Calu3 (cell line): ENCODE measurements at regions of chr7 and their contacts with region 1.

Region 1: DNA sequence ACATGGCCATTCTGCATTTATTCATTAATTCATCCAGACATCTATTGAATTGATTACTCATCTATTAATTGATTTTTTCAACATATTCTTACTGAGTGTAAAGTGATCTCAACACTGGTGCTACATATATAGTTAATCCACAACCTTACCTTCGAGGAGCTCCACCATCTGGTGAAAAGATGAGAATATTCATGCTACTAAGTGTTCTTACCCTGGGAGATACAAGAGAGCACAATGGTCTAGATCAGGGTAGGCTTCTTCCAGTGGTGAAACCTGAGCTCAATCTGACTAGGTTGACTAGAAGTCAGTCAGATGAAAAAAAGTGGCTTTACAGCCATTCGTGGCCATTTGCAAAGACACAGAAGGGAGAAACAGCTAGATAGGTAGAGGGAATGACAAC is 507.4 kb downstream of the ANKRD7 start:
- DNase-seq: no peak
- H3K4me3 Mint-ChIP-seq: no peak overlapping the region
- H3K27ac Mint-ChIP-seq: no peak overlapping the region
- H3K4me1 Mint-ChIP-seq: no peaks in the 10 kb centered on the region
- H3K27me3 Mint-ChIP-seq: no peaks in the 10 kb centered on the region
- CTCF ChIP-seq: no peak

Region 2: DNA sequence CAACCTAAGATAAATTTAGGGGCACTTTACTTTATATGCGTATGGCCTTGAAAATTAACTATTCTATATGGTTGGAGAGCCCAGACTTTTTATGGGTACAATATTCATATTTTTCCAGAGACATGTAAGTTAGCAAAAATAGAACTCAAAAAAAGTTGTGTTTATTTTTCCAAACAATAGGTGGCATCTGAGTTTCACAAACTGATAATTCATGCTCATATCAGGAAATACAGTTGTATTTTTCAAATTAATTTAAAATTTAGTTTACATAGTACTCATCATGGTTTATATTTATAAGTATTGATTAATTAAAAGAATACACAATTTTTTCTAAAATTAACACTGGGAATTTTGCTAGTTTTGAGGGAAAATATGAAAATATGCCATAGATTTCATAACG is 472.7 kb before region 1 on chr7:
- CTCF ChIA-PET with region 1: no interaction called
- intact Hi-C with region 1: loop called (anchors 5 kb)
- DNase-seq: no peak
- H3K4me3 Mint-ChIP-seq: no peak overlapping the region
- H3K27ac Mint-ChIP-seq: no peak overlapping the region
- H3K4me1 Mint-ChIP-seq: no peaks in the 10 kb centered on the region
- H3K27me3 Mint-ChIP-seq: no peaks in the 10 kb centered on the region
- CTCF ChIP-seq: no peak

Region 3: DNA sequence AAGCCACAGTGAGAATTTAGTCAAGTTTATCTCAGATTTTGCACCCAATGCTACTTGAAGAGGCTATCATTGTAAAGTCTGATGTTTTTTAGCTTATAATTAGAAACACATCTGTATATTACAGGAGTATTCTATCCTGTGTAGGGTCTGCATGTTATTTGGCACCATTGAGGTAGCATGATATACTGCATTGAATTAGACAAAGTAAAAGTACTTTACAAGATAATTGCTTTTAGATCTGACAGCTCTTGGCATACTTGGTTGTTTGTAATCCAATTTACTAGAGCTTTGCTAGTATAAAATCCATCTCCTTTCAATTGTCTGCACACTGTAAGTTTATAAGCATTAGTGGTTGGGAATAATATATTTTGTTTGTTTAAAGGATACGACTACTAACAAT is 207.0 kb after region 1 on chr7:
- CTCF ChIA-PET with region 1: no interaction called
- intact Hi-C with region 1: no loop called
- DNase-seq: no peak
- H3K4me3 Mint-ChIP-seq: no peak overlapping the region
- H3K27ac Mint-ChIP-seq: no peak overlapping the region
- H3K4me1 Mint-ChIP-seq: no peaks in the 10 kb centered on the region
- H3K27me3 Mint-ChIP-seq: no peaks in the 10 kb centered on the region
- CTCF ChIP-seq: no peak